ENCODE measurements at regions of chr2 and their contacts with region 1.

Region 1: DNA sequence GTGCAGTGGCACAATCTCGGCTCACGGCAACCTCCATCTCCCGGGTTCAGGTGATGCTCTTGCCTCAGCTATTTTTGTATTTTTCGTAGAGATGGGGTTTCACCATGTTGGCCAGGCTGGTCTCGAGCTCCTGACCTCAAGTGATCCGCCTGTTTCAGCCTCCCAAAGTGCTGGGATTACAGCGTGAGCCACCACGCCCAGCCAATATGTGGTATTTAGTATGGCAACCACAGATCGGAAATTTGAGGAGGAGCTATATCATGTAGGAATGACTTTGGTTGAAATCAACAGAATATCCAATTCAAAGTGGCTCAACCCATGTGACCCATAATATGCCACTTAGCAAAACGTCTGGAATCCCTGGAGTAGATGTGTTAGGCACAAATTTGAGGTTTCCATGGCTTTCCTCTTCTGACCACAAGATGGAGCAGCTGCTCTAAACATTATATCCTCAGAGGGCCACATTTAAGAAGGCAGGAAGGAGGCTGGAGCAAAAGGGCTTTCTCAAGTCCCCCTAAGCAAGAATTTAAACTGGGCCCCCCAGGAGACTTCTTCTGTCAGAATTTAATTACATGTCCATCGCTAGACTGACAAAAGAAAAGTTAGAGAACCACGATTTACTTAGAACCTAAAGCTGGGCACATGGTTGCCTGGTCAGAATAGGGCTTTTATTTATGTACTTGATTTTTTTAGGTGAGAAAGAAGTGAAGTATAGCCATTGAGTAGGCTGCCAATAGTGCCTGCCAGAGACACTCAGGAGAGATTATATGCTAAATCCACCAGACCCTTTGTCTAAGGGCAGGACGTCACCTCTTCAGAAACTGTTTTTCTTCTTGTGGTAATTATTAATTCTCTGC is 49.6 kb upstream of the ITSN2 start:
- DNase-seq: peak; percentile 38
- H3K4me3 Mint-ChIP-seq: no peak overlapping the region
- H3K27ac Mint-ChIP-seq: no peak overlapping the region
- H3K4me1 Mint-ChIP-seq: no peaks in the 10 kb centered on the region
- H3K27me3 Mint-ChIP-seq: peaks cover 7% of the 10 kb centered on the region

Region 2: DNA sequence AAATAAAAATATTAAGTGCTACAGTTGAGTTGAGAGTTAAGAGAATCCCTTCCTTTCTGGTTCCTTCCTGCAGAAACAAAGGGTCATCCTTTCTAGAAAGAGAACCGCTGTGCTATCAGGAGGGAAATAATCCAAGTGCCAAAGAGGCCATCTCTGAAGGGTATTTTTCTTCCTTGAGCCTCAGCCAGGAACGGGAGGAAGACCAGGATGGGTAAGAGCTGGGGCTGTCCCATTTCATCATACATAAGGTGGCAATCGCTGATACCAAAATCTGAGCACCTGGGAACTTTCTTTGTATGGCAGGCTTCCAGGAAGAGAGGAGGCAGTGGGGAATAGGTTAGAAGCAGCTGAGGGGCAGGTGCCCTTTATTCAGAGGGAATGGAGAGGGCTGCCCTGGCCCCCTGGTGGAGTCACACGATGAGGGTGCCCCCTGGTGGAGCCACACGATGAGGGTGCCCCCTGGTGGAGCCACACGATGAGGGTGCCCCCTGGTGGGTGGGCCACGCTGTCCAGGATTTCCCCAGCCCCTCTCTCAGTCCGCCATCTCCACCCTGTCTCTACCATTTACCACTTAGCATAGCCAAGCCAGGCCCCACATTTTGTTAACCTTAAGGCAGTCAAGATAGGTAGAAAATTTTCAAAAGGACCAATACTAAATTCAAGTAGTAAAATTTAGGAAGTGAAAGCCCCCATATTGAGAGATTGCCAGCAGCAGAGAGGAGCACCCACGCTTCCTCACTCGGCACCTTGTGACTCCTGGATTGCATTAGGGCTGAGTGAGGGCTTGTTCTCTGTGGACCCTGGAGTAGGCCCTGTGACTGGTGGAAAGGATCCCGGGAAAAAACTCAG is 245.6 kb before region 1 on chr2:
- CTCF ChIA-PET with region 1: no interaction called
- POLR2A ChIA-PET with region 1: no interaction called
- intact Hi-C with region 1: no loop called
- DNase-seq: peak; percentile 58
- H3K4me3 Mint-ChIP-seq: no peak overlapping the region
- H3K27ac Mint-ChIP-seq: no peak overlapping the region
- H3K4me1 Mint-ChIP-seq: no peaks in the 10 kb centered on the region
- H3K27me3 Mint-ChIP-seq: no peaks in the 10 kb centered on the region

Region 3: DNA sequence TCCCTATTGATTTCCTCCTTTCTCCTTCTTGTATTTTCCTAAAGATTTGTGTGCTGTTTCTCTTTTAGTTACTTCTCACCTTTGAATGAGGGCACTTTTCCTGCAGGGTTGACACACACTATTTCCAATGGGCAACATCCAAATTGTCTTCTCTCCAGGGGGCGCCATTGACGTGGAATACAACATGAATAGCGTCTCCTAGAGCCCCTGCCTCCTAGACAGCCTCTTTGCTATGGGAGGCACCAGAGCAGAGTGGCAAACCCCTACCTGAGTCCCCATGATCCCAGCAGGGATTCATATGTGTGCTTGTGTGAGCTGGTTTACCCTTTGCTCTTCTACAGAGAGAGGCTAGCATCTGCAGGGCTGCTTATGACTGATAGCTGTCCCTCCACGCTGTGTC is 11.7 kb after region 1 on chr2:
- CTCF ChIA-PET with region 1: interaction called, 28 read pairs
- POLR2A ChIA-PET with region 1: interaction called, 3 read pairs
- intact Hi-C with region 1: no loop called
- DNase-seq: peak; percentile 74
- H3K4me3 Mint-ChIP-seq: no peak overlapping the region
- H3K27ac Mint-ChIP-seq: no peak overlapping the region
- H3K4me1 Mint-ChIP-seq: peaks cover 2% of the 10 kb centered on the region
- H3K27me3 Mint-ChIP-seq: no peaks in the 10 kb centered on the region

Region 4: DNA sequence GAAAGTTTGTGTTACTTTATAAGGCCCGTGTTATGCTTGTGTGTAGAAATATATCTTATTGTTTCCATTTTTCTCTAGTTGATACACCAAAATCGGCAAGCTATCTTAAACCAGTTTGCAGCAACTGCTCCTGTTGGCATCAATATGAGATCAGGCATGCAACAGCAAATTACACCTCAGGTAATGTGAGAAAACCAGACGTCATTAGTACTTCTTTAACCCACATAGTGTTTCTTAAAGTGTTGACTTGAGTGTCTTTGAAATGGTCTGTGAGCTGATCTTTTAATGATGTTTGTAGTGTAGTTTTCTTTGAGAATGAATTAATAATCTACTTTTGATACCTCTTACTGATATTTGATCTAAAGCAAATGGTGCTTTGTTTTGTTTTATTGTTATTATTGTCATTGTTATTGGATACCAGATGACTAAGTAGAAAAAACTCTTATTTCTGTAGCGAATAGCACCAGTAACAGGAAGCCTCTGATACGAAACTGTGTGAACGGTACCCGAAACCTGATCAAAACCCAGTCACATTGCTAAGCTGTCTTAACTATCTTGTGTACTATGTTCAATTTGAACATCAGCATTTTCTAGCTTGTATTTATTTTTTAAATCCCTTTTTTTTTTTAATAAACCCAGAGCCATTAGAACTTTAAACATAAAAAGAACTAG is 329.6 kb after region 1 on chr2:
- CTCF ChIA-PET with region 1: interaction called, 10 read pairs
- POLR2A ChIA-PET with region 1: no interaction called
- intact Hi-C with region 1: no loop called
- DNase-seq: no peak
- H3K4me3 Mint-ChIP-seq: no peak overlapping the region
- H3K27ac Mint-ChIP-seq: no peak overlapping the region
- H3K4me1 Mint-ChIP-seq: peaks cover 14% of the 10 kb centered on the region
- H3K27me3 Mint-ChIP-seq: no peaks in the 10 kb centered on the region

Region 5: GRCh38 chr2:24779116-24779515 is 369.2 kb after region 1 on chr2:
- CTCF ChIA-PET with region 1: no interaction called
- POLR2A ChIA-PET with region 1: no interaction called
- intact Hi-C with region 1: no loop called
- DNase-seq: no peak
- H3K4me3 Mint-ChIP-seq: no peak overlapping the region
- H3K27ac Mint-ChIP-seq: no peak overlapping the region
- H3K4me1 Mint-ChIP-seq: no peaks in the 10 kb centered on the region
- H3K27me3 Mint-ChIP-seq: peaks cover 9% of the 10 kb centered on the region

Region 6: GRCh38 chr2:24792874-24793760 is 383.2 kb after region 1 on chr2 and contains the starts of genes CENPO and PTRHD1:
- CTCF ChIA-PET with region 1: interaction called, 13 read pairs
- POLR2A ChIA-PET with region 1: interaction called, 3 read pairs
- intact Hi-C with region 1: no loop called
- DNase-seq: peak; percentile 97
- H3K4me3 Mint-ChIP-seq: peak within 1 kb of the TSS; percentile 98
- H3K27ac Mint-ChIP-seq: peak within 1 kb of the TSS; percentile 100
- H3K4me1 Mint-ChIP-seq: peaks cover 35% of the 10 kb centered on the region
- H3K27me3 Mint-ChIP-seq: no peaks in the 10 kb centered on the region
- total RNA-seq, gene CENPO: 39.9 to 42.4 TPM
- total RNA-seq, gene PTRHD1: 19.2 to 20.3 TPM

Region 7: DNA sequence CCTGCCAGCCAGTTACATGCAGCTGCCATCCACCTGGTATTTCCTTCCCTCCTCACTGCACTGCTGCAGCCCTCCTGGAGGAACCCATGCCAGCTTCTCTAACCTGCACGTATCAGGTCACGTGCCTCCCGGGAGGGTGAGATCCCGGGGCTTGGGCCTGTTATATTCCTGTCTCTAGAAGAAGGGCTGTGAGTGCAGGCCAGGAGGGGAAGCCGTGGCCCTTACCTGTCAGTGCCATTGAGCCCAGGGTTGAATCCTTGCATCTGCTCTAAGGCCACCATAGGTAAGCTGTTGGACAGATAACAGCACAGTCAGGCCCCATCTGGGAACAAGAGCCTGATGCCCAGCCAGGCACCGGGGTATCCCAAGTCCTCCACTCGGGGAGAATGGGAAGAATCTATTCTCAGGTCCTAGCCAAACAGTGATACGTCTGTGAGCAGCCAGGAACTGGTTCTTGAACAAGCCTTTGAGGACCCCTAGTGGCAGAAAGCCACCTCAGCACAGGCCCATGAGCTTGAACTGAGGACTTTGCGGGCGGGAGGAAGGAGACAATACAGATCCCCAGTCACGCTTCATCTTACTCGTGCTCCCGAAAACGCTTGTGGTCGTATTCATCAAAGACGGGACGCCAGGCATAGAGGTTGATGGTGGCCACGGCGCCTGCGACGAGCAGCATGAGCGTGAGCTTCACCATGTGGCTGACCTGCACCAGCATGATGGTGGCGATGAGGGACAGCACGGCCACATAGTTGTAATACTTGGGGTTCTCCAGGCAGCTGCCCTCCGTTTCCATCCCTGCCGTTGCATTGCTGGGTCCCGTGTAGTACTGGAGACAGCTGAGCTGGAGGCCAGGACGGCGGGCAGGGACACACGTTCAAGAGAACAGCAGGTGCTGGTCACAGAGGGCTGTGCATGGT is 417.7 kb after region 1 on chr2:
- CTCF ChIA-PET with region 1: interaction called, 163 read pairs
- POLR2A ChIA-PET with region 1: interaction called, 3 read pairs
- intact Hi-C with region 1: loop called (anchors 1 kb)
- DNase-seq: peak; percentile 81
- H3K4me3 Mint-ChIP-seq: no peak overlapping the region
- H3K27ac Mint-ChIP-seq: peak overlapping the region; percentile 3
- H3K4me1 Mint-ChIP-seq: peaks cover 25% of the 10 kb centered on the region
- H3K27me3 Mint-ChIP-seq: no peaks in the 10 kb centered on the region

Region 8: DNA sequence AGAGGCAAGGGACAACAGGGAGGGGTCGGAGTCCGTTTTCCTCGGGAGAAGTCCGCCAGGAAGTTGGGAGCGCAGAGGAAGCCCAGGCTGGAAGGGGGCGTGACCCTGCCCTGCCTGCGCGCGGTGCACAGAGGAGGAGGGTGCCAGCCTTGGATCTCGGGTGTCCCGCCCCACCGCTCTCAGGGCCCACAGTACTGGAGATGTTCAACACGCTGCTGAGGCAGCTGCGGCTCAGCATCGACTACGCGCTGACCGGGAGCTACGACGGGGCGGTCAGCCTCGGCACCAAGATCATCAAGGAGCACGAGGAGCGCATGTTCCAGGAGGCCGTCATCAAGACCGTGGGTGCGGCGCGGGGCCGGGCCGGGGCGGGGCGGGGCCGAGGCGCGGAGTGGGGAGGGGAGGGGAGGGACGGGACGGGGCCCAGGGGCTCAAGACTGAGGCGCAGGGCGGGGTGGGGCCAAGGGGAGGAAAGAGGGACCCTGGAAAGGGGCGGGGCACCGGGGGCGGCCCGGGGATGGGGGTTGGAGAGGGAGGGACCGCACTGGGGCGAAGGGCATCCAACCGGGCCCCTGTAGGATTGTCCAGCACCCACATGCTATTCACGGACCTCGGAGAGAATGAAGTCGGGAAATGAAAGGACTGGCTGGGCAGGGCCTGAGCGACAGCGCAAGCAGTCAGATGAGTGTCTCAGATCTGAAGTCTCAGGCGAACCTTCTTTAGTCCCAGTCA is 721.8 kb after region 1 on chr2:
- CTCF ChIA-PET with region 1: interaction called, 10 read pairs
- POLR2A ChIA-PET with region 1: no interaction called
- intact Hi-C with region 1: loop called (anchors 5 kb)
- DNase-seq: peak; percentile 23
- H3K4me3 Mint-ChIP-seq: peak overlapping the region; percentile 48
- H3K27ac Mint-ChIP-seq: no peak overlapping the region
- H3K4me1 Mint-ChIP-seq: peaks cover 12% of the 10 kb centered on the region
- H3K27me3 Mint-ChIP-seq: peaks cover 50% of the 10 kb centered on the region

Region 9: DNA sequence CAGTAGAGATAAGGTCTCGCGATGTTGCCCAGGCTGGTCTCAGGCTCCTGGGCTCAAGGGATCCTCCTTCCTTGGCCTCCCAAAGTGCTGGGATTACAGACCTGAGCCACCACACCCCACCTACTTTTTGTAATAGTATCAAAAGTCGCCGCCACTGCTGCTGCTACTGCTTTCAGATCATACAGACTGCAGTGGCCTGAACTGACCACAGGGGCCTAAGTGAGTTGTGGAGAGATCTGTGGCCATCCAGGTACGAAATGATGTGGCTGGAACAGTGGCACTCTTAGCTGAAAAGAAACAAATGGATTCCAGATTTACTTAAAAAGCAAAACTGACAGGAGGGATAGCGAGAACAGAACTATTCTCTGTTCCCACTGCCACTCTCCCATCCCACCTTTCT is 791.3 kb after region 1 on chr2:
- CTCF ChIA-PET with region 1: interaction called, 5 read pairs
- POLR2A ChIA-PET with region 1: no interaction called
- intact Hi-C with region 1: loop called (anchors 1 kb)
- DNase-seq: no peak
- H3K4me3 Mint-ChIP-seq: no peak overlapping the region
- H3K27ac Mint-ChIP-seq: no peak overlapping the region
- H3K4me1 Mint-ChIP-seq: peaks cover 6% of the 10 kb centered on the region
- H3K27me3 Mint-ChIP-seq: no peaks in the 10 kb centered on the region